Activated naive CD4-positive, alpha-beta T cell treated with anti-CD3 and anti-CD28 coated beads, Interleukin-2, amount 10 ng/mL, durations not matched to agents 7 days and 5 days (primary cell): ENCODE measurements at regions of chr1 and their contacts with region 1.

Region 1: DNA sequence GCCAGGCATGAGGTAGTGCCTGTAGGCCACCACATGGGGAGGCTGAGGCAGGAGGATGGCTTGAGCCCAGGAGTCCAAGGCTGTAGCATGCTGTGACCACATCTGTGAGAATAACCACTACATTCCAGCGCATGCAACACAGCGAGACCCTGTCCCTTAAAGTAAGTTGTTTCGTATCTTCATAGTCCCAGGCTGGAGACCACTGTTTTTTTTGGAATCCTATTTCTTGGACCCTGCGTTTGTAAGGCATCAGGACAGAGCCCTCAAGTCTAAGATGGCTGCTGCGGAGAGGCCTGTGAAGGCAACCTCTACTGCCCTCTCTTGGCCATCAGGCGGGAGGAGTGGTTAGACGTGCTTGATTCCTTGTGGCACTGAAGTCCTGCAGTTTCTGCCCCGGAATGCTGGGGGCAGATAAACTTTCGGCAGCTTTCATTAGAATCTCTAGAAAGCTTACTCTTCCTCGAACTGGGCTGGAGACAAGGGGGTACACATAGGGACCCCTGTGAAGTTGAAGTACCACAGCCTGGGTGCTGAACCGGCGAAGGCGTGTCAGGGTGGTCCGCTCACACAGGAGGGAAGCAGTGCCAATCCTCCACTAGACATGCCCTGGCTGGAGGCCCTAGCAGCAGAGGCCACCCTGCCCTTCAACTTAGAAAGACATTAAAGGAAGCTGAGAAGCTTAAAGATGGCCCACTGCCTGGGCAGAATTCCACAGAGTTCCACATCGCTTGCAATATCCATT is 36.6 kb downstream of the RABIF start:
- DNase-seq: peak; percentile 69
- H3K4me3 Mint-ChIP-seq: no peak overlapping the region
- H3K27ac Mint-ChIP-seq: no peak overlapping the region
- H3K4me1 Mint-ChIP-seq: peaks cover 4% of the 10 kb centered on the region
- H3K27me3 Mint-ChIP-seq: peaks cover 7% of the 10 kb centered on the region

Region 2: GRCh38 chr1:202692959-202693555 is 159.3 kb before region 1 on chr1:
- CTCF ChIA-PET with region 1: no interaction called
- DNase-seq: peak; percentile 87
- H3K4me3 Mint-ChIP-seq: no peak overlapping the region
- H3K27ac Mint-ChIP-seq: no peak overlapping the region
- H3K4me1 Mint-ChIP-seq: peaks cover 4% of the 10 kb centered on the region
- H3K27me3 Mint-ChIP-seq: peaks cover 68% of the 10 kb centered on the region

Region 3: DNA sequence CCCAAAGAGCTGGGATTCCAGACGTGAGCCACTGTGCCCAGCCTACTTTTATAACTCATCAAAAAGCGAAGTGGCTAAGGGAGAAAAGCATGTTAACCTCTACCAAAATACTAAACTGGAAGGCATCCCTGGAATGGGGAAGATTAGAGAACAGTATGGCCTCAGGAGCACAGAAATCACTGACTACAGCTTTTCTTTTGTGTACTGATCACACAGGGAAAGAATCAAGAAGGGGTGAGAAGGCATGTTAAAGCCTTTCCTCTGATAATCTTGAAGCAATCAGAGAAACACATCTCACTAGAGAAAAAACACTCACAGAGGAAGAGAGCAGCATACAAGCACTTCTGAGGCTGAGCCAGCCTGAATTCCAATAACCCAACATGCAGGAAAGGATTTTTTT is 30.9 kb before region 1 on chr1:
- CTCF ChIA-PET with region 1: no interaction called
- DNase-seq: no peak
- H3K4me3 Mint-ChIP-seq: no peak overlapping the region
- H3K27ac Mint-ChIP-seq: no peak overlapping the region
- H3K4me1 Mint-ChIP-seq: no peaks in the 10 kb centered on the region
- H3K27me3 Mint-ChIP-seq: peaks cover 79% of the 10 kb centered on the region

Region 4: GRCh38 chr1:202835548-202836090 is 16.7 kb before region 1 on chr1:
- CTCF ChIA-PET with region 1: interaction called, 11 read pairs
- DNase-seq: peak; percentile 56
- H3K4me3 Mint-ChIP-seq: peak overlapping the region; percentile 38
- H3K27ac Mint-ChIP-seq: peak overlapping the region; percentile 11
- H3K4me1 Mint-ChIP-seq: peaks cover 60% of the 10 kb centered on the region
- H3K27me3 Mint-ChIP-seq: peaks cover 10% of the 10 kb centered on the region

Region 5: DNA sequence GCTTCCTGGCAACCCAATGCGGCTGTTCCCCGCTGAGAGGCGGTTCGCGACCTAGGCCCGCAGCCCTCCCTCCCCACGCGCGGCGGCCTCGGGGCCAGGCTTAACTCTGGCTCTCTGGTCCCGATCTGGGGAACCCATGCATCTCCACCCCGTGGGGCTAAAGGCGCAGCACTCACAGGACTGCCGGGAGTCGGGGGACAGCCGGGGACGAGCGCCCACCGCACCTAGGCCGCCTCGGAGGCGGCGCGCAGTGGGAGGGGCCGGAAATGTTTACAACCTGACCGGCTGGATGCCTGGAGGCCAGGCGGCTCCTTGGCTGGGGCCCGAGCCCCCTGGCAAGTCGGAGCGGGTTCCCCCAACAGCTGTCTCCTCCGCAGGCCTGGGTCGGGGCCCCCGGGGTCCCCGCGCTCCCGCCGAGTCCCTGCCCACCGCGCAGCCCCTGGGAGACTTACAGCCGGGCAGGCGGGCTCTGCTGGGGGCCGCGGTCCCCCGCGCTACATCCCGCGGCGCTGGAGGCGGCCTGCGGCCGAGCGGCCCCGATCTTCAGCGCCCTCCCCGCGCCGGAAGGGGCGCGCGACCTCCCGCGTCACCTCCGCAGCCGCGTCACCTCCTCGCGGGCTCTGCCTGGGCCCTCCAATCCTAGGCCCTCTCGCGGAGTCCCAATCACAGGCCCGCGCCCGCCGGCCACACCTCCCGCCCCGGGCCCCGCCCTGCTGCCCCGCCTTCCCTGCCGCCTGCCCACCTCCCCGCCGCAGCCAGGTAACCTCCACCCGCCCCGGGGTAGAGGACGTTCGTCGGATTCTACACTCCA is 105.6 kb after region 1 on chr1 and contains the start of gene ADIPOR1:
- CTCF ChIA-PET with region 1: no interaction called
- DNase-seq: peak; percentile 96
- H3K4me3 Mint-ChIP-seq: peak within 1 kb of the TSS; percentile 86
- H3K27ac Mint-ChIP-seq: peak within 1 kb of the TSS; percentile 92
- H3K4me1 Mint-ChIP-seq: peaks cover 51% of the 10 kb centered on the region
- H3K27me3 Mint-ChIP-seq: no peaks in the 10 kb centered on the region